Vagina (tissue), 2 donors: ENCODE measurements at regions of chr2 and their contacts with region 1.

Region 1: DNA sequence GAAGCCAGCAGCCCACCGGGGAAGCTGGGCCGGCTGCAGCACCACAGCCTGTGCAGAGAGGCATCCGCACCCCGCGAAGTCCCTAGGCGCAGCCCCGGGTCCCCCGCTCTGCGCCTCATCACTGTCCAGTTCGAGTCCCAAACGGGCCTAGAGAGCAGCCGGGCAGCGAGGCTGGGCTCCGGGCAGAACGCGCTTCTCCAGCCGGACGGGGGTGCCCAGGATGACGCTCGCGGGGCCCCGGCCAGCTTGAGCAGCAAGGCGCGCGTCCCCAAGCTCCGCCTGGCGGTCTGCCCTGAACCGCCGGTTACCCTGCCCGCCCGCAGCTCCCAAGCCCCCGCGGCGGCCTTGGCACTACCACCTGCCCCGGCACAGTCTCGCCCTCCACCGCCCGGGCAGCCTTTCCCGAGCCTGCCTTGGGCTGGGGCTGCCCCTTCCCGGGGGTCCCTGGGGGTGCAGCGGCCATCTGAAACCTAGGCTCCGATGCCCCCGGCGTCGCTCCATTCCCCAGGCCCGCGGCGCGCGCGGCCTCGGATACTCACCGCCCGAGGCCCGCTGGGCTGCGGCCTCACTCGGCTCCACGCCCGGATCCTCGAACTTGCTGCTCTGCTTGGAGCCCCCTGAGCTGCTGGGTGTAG is 591 bp downstream of the SLC16A14 start:
- DNase-seq: no peak
- H3K4me3 ChIP-seq: peak overlapping the region; percentile 65 to 76
- H3K27ac ChIP-seq: peak overlapping the region; percentile 84
- H3K4me1 ChIP-seq: peaks cover 15% of the 10 kb centered on the region
- H3K27me3 ChIP-seq: no peaks in the 10 kb centered on the region
- CTCF ChIP-seq: no peak
- POLR2A ChIP-seq: no peak

Region 2: DNA sequence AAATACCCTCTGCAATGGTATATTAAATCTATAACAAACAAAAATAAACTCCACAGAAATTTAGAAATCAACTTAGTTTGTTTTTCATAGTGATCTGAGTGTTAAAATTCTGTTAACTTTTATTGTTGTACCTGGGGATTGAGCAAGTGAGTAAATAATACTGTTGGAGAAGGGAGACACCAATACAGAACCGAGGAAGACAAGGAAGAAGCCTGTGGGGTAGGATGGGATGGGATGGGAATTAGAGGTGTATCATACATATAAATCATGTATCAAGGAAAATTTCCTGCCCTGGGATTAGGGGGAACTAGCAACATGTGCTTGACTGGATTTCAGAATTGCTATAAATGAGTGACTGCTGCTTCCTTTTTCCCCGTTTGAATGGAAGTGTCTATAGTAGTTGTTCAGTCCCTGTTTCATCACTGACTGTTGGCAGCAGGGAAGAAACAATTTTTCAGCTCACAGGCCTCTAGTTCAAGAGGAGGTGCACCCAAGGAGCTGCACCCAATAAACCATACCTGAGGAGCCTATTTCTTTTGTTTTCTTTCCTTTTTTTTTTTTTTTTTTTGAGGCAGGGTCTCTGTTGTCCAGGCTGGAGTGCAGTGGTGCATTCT is 98.5 kb after region 1 on chr2:
- intact Hi-C with region 1: loop called (anchors 5 kb)
- DNase-seq: no peak
- H3K4me3 ChIP-seq: no peak overlapping the region
- H3K27ac ChIP-seq: no peak overlapping the region
- H3K4me1 ChIP-seq: peaks cover 12% of the 10 kb centered on the region
- H3K27me3 ChIP-seq: no peaks in the 10 kb centered on the region
- CTCF ChIP-seq: no peak
- POLR2A ChIP-seq: no peak